ENCODE measurements at regions of chr4 and their contacts with region 1.

Region 1: DNA sequence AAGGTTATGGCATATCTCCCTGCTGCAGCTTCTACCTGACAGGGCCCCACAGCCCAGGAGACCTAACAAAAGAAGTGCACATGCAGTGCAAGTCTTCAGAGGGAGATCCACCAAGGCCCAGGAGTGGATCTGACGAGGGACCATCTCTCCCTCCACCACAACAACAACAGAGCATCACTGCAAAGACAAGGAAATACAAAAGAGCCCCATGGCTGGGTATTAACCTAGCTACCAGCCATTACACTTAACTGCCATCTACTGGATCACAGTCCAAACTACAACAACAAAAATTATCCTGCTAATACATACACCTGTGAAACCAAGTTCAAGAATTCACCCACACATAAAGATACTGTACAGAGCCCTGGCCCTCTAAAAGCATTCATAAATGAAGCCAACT is 280.2 kb upstream of the SLC7A11 start:
- DNase-seq: no peak
- H3K4me3 ChIP-seq: no peak overlapping the region
- H3K27ac ChIP-seq: no peak overlapping the region
- H3K4me1 ChIP-seq: no peaks in the 10 kb centered on the region
- H3K27me3 ChIP-seq: no peaks in the 10 kb centered on the region
- CTCF ChIP-seq: peak in 2 of 3 experiments; percentile 55 to 58; a peak in 3 of 4 replicates
- EP300 ChIP-seq: no peak
- POLR2A ChIP-seq: no peak
- RAD21 ChIP-seq: peak; percentile 80 to 86

Region 2: GRCh38 chr4:138035781-138036258 is 486.5 kb before region 1 on chr4:
- CTCF ChIA-PET with region 1: interaction called, 18 read pairs
- POLR2A ChIA-PET with region 1: no interaction called
- DNase-seq: no peak
- H3K4me3 ChIP-seq: no peak overlapping the region
- H3K27ac ChIP-seq: no peak overlapping the region
- H3K4me1 ChIP-seq: no peaks in the 10 kb centered on the region
- H3K27me3 ChIP-seq: no peaks in the 10 kb centered on the region
- CTCF ChIP-seq: peak in 2 of 3 experiments; percentile 61 to 77; a peak in 3 of 4 replicates
- EP300 ChIP-seq: no peak
- POLR2A ChIP-seq: no peak
- RAD21 ChIP-seq: peak; percentile 91 to 95

Region 3: GRCh38 chr4:138188406-138189084 is 333.8 kb before region 1 on chr4:
- CTCF ChIA-PET with region 1: interaction called, 27 read pairs
- POLR2A ChIA-PET with region 1: no interaction called
- DNase-seq: no peak
- H3K4me3 ChIP-seq: no peak overlapping the region
- H3K27ac ChIP-seq: no peak overlapping the region
- H3K4me1 ChIP-seq: peaks cover 0 to 7% (median 5%) of the 10 kb centered on the region in 4 experiments; a peak in 2 of 7 replicates
- H3K27me3 ChIP-seq: no peaks in the 10 kb centered on the region
- CTCF ChIP-seq: no peak
- EP300 ChIP-seq: no peak
- POLR2A ChIP-seq: no peak
- RAD21 ChIP-seq: no peak

Region 4: DNA sequence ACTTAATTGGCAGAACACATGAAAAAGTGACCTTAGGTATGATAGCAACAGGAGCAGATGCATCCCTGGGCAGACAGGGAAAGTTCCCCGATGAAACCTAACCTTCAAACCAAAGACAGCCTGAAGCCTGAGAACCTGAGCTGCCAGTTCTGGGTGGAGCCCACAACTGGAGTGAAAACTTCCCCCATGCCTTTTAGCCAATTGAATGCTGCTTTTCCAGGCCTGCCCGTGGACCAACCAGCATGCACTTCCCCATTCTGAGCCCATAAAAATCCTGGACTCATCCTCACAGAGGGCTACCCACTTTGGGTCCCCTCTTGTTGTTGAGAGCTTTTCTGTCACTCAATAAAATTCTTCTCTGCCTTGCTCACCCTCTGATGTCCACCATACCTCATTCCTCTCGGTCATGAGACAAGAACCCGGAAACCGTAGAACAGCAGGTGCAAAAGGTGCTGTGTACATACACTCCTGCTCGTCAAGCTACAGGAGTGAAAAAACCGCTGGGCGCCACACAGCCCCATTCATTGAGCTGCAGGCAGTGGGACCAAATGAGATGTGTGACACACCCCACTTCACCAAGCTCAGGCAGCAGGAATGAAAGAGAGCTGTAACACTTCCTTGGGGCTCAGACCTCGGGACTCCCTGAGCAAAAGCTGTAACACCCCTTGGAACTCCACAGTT is 266.3 kb before region 1 on chr4:
- CTCF ChIA-PET with region 1: no interaction called
- POLR2A ChIA-PET with region 1: no interaction called
- DNase-seq: no peak
- H3K4me3 ChIP-seq: no peak overlapping the region
- H3K27ac ChIP-seq: no peak overlapping the region
- H3K4me1 ChIP-seq: no peaks in the 10 kb centered on the region
- H3K27me3 ChIP-seq: no peaks in the 10 kb centered on the region
- CTCF ChIP-seq: no peak
- EP300 ChIP-seq: no peak
- POLR2A ChIP-seq: no peak
- RAD21 ChIP-seq: no peak

Region 5: DNA sequence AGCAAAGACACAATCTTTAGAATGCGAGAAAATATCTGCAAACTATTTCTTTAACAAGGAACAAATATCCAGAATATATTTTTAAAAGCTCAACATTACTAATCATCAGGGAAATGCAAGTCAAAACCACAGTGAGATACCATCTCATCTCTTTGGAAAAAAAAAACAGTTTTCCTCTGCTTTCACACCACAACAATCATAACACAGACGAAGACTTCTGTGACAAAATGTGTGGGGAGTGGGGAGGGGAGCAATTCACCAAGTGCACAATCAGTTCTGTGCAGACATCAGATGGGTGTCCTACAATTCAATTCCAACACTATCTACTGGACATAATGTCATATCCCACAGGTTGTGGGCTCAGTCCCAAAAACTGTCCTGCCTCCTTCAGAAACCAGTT is 12.9 kb after region 1 on chr4:
- CTCF ChIA-PET with region 1: interaction called, 11 read pairs
- POLR2A ChIA-PET with region 1: no interaction called
- DNase-seq: no peak
- H3K4me3 ChIP-seq: no peak overlapping the region
- H3K27ac ChIP-seq: no peak overlapping the region
- H3K4me1 ChIP-seq: no peaks in the 10 kb centered on the region
- H3K27me3 ChIP-seq: no peaks in the 10 kb centered on the region
- CTCF ChIP-seq: no peak
- EP300 ChIP-seq: no peak
- POLR2A ChIP-seq: no peak
- RAD21 ChIP-seq: no peak

Region 6: GRCh38 chr4:138562544-138562991 is 40.2 kb after region 1 on chr4:
- CTCF ChIA-PET with region 1: interaction called, 11 read pairs
- POLR2A ChIA-PET with region 1: no interaction called
- DNase-seq: no peak
- H3K4me3 ChIP-seq: no peak overlapping the region
- H3K27ac ChIP-seq: no peak overlapping the region
- H3K4me1 ChIP-seq: no peaks in the 10 kb centered on the region
- H3K27me3 ChIP-seq: no peaks in the 10 kb centered on the region
- CTCF ChIP-seq: no peak
- EP300 ChIP-seq: no peak
- POLR2A ChIP-seq: no peak
- RAD21 ChIP-seq: no peak

Region 7: DNA sequence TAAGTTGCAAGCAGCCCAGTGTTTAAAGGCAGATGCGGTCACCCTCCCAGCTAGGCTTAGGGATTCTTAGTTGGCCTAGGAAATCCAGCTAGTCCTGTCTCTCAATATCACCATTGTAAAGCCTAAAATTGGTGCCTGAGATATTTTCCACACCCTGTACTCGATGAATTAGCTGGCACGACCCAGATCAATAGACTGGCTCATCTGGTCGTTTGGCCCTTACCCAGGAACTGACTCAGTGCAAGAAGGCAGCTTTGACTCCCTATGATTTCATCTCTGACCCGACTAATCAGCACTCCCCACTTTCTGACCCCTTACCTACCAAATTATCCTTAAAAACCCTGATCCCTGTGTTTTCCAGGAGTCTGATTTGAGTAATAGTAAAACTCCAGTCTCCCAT is 104.7 kb after region 1 on chr4:
- CTCF ChIA-PET with region 1: no interaction called
- POLR2A ChIA-PET with region 1: no interaction called
- DNase-seq: no peak
- H3K4me3 ChIP-seq: no peak overlapping the region
- H3K27ac ChIP-seq: no peak overlapping the region
- H3K4me1 ChIP-seq: peaks cover 0 to 4% (median 0%) of the 10 kb centered on the region in 4 experiments; a peak in 1 of 7 replicates
- H3K27me3 ChIP-seq: no peaks in the 10 kb centered on the region
- CTCF ChIP-seq: no peak
- EP300 ChIP-seq: no peak
- POLR2A ChIP-seq: no peak
- RAD21 ChIP-seq: no peak

Region 8: GRCh38 chr4:138789796-138790195 is 267.4 kb after region 1 on chr4:
- CTCF ChIA-PET with region 1: no interaction called
- POLR2A ChIA-PET with region 1: no interaction called
- DNase-seq: no peak
- H3K4me3 ChIP-seq: no peak overlapping the region
- H3K27ac ChIP-seq: no peak overlapping the region
- H3K4me1 ChIP-seq: no peaks in the 10 kb centered on the region
- H3K27me3 ChIP-seq: no peaks in the 10 kb centered on the region
- CTCF ChIP-seq: no peak
- EP300 ChIP-seq: no peak
- POLR2A ChIP-seq: no peak
- RAD21 ChIP-seq: no peak

Region 9: DNA sequence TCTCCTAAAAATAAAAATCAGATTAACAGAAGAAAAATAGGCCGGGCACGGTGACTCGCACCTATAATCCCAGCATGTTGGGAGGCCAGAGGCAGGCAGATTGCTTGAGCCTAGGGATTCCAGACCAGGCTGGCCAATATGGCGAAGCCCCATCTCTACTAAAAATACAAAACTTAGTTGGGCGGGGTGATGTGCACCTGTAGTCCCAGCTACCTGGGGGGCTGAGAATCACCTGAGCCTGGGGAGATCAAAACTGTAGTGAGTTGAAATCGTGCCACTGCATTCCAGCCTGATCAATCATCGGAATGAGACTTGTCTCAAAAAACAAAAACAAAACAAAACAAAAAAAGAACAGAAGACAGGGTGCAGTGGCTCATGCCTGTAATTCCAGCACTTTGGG is 460.4 kb after region 1 on chr4:
- CTCF ChIA-PET with region 1: no interaction called
- POLR2A ChIA-PET with region 1: no interaction called
- DNase-seq: peak in 1 of 2 experiments; percentile 38
- H3K4me3 ChIP-seq: no peak overlapping the region
- H3K27ac ChIP-seq: no peak overlapping the region
- H3K4me1 ChIP-seq: peaks cover 0 to 14% (median under 1%) of the 10 kb centered on the region in 4 experiments; a peak in 4 of 7 replicates
- H3K27me3 ChIP-seq: no peaks in the 10 kb centered on the region
- CTCF ChIP-seq: no peak
- EP300 ChIP-seq: no peak
- POLR2A ChIP-seq: no peak
- RAD21 ChIP-seq: no peak

Measured in H1 (cell line).